ENCODE measurements at regions of chr13 and their contacts with region 1.

Region 1: DNA sequence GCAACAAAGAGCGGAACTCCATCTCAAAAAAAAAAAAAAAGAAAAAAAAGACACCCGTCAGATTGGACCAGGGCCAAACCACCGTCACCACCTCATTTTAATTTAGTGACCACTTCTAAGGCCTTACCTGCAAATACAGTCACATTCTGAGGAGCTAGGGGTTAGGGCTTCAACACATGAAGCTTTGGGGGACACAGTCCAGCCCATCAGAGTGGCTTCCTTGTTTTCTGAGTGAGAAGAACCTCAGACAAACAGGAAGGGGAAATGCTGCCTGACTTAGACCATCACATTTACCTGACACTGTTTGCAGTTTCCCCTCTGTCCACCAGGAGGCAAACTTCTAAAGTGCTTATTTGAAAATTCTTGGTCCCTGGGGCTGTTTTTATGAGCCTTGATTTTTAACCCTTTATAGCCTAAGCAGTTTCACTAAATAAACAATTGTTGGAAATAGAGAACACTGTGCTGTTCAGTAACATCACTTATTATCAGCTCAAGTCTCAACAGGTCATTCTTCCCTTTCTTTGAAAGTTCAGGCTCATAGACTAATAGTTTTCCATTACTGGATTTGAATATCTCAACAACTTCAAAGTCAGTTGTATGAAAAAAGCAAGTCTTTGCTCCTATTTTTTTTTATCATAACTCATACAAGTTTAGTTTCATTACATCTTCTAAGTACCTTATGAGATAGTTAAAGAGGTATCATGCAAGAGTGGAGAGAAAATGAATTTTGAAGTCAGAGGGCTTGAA is 74.9 kb upstream of the WASF3 start:
- DNase-seq: no peak
- H3K4me3 ChIP-seq: no peak overlapping the region
- CTCF ChIP-seq: peak; percentile 77

Region 2: DNA sequence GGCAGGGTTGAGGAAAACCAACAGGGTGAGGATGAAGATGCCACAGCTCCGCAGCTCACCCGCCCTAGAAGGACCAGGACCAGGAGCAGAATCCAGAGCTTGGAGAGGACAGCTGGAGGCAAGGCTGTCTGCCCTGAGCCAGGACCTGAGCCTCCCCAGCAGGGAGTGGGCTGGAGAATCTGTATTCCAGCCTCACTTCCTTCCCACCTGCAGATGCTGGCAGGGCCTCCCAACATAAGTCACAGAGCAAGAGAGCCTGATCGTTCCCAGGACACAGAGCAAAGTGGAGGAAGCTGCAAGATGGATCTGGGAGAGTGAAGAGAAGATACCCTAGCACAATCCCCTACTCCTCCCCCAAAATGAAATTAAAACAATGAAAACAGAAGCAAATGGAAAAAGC is 13.1 kb after region 1 on chr13:
- CTCF ChIA-PET with region 1: interaction called, 83 read pairs
- POLR2A ChIA-PET with region 1: no interaction called
- DNase-seq: no peak
- H3K4me3 ChIP-seq: no peak overlapping the region
- CTCF ChIP-seq: no peak

Region 3: GRCh38 chr13:26502826-26503225 is 20.2 kb after region 1 on chr13:
- CTCF ChIA-PET with region 1: interaction called, 83 read pairs
- POLR2A ChIA-PET with region 1: no interaction called
- DNase-seq: no peak
- H3K4me3 ChIP-seq: no peak overlapping the region
- CTCF ChIP-seq: no peak

Region 4: GRCh38 chr13:26628706-26629105 is 146.1 kb after region 1 on chr13:
- CTCF ChIA-PET with region 1: interaction called, 14 read pairs
- POLR2A ChIA-PET with region 1: no interaction called
- DNase-seq: no peak
- H3K4me3 ChIP-seq: no peak overlapping the region
- CTCF ChIP-seq: peak; percentile 21

Region 5: DNA sequence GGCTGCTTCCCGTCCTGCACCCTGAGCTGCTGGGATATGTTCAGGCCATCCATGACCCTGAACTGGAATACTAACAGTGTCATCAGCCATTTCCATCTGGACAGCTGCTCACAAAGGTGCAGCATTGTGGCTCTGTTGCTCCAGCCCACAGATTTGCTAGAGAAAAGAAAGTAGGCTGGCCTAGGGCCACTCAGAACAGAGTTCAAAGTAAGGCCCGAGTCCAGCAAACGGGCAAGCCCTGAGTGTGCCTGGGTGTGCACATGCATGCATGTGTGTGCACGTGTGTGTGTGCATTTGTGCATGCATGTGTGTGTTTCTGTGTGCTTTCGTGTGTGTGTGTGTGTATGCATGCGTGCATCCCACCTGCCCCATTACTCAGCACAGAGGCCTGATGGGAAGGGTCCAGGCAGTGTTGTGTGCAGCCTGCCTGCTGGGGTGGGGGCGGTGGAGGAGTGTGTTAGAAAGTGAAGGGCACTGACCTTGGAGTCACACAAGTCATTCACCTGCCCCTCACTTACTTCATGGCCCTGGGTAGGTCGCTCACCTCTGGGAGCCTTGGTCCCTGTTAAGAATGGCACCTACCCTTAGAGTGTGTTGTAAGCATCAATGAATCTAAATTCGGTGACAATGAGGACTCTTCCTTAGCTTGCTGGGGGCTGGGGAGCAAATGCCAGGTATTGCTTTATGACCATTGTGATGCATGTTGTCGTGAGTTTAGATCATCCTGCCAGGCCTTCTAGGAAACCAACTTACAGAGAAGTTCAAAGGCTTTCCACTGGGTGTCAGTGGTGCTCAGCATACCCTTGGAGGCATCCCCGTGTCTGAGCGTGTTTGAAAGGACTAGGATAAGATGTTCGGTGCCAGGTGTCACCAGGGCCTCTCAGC is 224.7 kb after region 1 on chr13:
- CTCF ChIA-PET with region 1: interaction called, 19 read pairs
- POLR2A ChIA-PET with region 1: no interaction called
- DNase-seq: no peak
- H3K4me3 ChIP-seq: no peak overlapping the region
- CTCF ChIP-seq: peak; percentile 67

Measured in AG04449 (cell line).